BJ (cell line): ENCODE measurements at regions of chr2 and their contacts with region 1.

Region 1: GRCh38 chr2:85642725-85643124 is 25.3 kb downstream of the SFTPB start:
- DNase-seq: no peak
- H3K4me3 ChIP-seq: no peak overlapping the region
- H3K27me3 ChIP-seq: no peaks in the 10 kb centered on the region
- CTCF ChIP-seq: no peak

Region 2: GRCh38 chr2:85445316-85446295 is 197.1 kb before region 1 on chr2:
- CTCF ChIA-PET with region 1: no interaction called
- POLR2A ChIA-PET with region 1: no interaction called
- DNase-seq: peak; percentile 49
- H3K4me3 ChIP-seq: no peak overlapping the region
- H3K27me3 ChIP-seq: no peaks in the 10 kb centered on the region; the same call in 1 of the 2 replicates
- CTCF ChIP-seq: no peak

Region 3: GRCh38 chr2:85628658-85629057 is 14.1 kb before region 1 on chr2:
- CTCF ChIA-PET with region 1: interaction called, 11 read pairs
- POLR2A ChIA-PET with region 1: no interaction called
- DNase-seq: no peak
- H3K4me3 ChIP-seq: no peak overlapping the region
- H3K27me3 ChIP-seq: no peaks in the 10 kb centered on the region
- CTCF ChIP-seq: no peak

Region 4: GRCh38 chr2:85712849-85713602 is 70.3 kb after region 1 on chr2:
- CTCF ChIA-PET with region 1: interaction called, 92 read pairs
- POLR2A ChIA-PET with region 1: no interaction called
- DNase-seq: no peak
- H3K4me3 ChIP-seq: no peak overlapping the region
- H3K27me3 ChIP-seq: no peaks in the 10 kb centered on the region; the same call in 1 of the 2 replicates
- CTCF ChIP-seq: no peak

Region 5: GRCh38 chr2:85723707-85724360 is 81.1 kb after region 1 on chr2:
- CTCF ChIA-PET with region 1: interaction called, 27 read pairs
- POLR2A ChIA-PET with region 1: no interaction called
- DNase-seq: no peak
- H3K4me3 ChIP-seq: no peak overlapping the region
- H3K27me3 ChIP-seq: no peaks in the 10 kb centered on the region
- CTCF ChIP-seq: no peak

Region 6: DNA sequence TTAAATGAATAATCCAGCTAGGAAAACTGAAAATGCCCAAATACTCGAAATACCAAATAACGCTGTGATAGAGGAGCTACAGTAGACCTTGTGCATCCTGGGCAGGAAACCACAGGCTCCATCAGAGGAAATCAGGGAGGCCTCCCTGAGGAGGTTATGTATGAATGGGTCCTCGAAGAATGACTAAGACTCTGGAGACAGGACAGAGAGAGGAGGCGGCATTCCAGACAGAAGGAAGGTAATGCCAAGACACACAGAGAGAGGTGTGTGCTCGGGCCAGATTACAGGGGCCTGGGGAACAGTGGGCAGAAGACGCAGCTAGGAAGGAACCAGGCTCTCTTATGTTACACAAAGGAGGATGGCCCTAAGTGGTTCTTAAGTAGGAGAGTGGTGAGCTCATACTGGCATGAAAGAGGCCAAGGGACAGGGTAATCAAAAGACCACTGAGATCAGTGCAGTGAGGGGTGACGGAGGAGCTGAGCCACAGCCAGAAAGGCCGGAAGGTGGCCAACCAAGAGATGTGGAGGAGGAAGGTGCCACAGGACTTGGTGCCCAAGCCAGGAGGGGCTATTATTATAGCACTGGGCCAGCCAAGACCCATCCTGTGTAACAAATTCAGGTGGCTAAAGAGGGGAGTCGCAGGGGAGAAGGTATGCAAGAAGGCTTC is 236.1 kb after region 1 on chr2:
- CTCF ChIA-PET with region 1: no interaction called
- POLR2A ChIA-PET with region 1: no interaction called
- DNase-seq: no peak
- H3K4me3 ChIP-seq: no peak overlapping the region
- H3K27me3 ChIP-seq: no peaks in the 10 kb centered on the region
- CTCF ChIP-seq: no peak